Left colon (tissue), 2 donors: ENCODE measurements at regions of chr6 and their contacts with region 1.

Region 1: GRCh38 chr6:24581084-24581669 is 64.8 kb downstream of the KIAA0319 start:
- DNase-seq: peak; percentile 50 to 89
- ATAC-seq: peak; percentile 88

Region 2: DNA sequence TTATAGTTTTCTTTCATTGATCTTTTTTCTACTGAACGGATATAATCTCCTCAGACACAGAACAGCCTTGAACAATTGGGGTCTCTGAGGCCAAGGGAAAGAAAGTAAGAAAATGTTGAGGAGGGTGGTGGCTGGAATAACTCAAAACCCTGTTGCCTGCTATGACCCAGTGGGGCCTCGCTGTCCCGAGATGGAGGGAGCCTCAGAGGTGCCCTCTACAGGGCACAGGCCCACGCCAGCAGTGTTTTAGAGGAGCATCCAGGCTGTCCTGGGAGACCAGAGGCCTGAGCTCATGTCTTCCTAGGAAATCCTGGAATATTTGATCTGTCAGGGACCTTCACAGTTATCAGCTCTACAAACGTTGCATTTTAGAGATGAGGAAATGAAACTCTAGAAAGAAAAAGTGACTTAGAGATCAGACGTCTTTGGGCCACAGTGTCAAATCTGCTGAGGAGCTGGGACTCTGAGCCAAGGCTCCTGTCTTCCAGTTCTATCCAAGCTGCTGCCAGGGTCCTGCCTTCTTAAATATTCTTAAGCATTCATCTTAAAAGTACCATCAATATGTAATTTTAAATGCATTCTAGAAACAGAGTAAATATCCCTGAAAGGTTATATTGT is 60.1 kb before region 1 on chr6:
- intact Hi-C with region 1: no loop called
- DNase-seq: peak in 1 of 2 donors; percentile 65
- ATAC-seq: peak; percentile 94

Region 3: DNA sequence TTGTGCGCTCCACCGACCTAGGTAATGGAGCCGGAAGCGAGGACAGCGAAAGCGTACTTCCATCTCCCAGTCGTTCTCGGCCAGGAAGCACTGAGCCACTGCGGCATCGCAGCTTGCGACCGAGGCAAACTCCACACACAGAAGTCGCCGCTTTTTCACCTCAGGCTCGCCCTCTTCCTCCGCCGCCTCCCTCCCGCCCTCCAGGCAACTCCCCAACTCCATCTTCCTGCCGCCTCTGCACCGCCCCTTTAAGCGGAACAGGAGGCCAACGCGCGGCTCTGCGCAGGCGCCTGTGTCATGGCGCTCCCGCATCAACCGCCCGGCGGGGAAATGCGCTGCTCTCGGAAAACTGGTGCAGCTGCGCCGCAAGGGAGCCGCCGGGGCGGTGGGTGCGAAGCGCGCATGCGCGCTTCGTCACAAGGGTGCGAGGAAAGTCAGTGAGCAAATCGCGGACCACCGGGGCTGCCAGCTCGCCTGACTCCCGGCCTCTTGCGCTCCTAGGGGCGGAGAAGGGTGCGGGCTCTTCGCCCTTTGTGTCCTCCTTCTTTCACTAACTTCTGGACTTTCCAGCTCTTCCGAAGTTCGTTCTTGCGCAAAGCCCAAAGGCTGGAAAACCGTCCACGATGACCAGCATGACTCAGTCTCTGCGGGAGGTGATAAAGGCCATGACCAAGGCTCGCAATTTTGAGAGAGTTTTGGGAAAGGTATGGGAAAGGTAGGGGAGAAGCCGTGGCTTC is 85.6 kb after region 1 on chr6 and contains the starts of genes ACOT13 and TDP2:
- intact Hi-C with region 1: no loop called
- DNase-seq: peak; percentile 95
- ATAC-seq: peak; percentile 81
- total RNA-seq, gene ACOT13: 41.2 to 51.1 TPM
- total RNA-seq, gene TDP2: 151 to 362 TPM

Region 4: GRCh38 chr6:24689964-24690363 is 108.8 kb after region 1 on chr6:
- intact Hi-C with region 1: loop called in 1 of 2 experiments (anchors 2 kb)
- DNase-seq: no peak
- ATAC-seq: no peak

Region 5: GRCh38 chr6:24766680-24767462 is 185.7 kb after region 1 on chr6:
- intact Hi-C with region 1: loop called in 1 of 2 experiments (anchors 10 kb)
- DNase-seq: no peak
- ATAC-seq: peak; percentile 73

Region 6: DNA sequence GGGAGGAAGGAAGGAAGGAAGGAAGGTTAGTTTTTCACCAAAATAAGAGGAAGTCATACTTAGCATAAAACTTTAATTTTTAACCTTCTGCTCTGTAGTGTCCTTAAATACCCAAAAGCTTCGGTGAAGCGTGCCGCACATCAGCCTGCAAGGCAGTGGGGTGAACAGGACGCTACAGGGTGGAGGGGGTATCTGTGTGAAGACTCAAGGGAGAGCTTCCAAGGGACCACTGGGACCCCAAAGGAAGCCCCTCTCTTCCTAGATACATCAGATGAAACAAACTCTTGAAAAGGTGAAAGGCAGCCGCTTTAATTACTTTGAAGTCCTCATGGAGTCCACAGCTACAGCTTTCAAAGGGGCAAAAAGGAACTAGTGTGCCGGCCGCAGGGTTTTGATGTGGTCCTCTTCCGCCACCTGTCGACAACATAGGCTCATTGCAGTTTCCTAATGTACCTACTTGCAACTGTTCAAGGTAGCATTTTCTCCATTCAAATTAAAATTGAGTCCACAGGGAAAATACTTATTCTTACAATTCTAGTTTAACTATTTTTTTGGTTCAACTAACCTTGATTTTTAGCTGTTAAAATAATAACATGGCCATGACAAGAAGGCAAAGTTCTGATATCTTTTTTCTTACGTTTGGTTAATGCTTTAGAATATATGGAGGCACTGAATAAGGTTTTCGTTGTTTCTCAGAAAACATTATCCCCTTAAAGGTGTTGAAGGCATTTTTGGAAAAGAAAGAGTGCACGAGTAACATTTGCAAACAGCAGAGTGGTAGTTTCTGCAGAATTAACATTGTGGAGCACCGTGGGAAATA is 489.6 kb after region 1 on chr6:
- intact Hi-C with region 1: loop called in 1 of 2 experiments (anchors 10 kb)
- DNase-seq: peak; percentile 63 to 80
- ATAC-seq: peak; percentile 87

Region 7: GRCh38 chr6:25107218-25107617 is 526.0 kb after region 1 on chr6:
- intact Hi-C with region 1: no loop called
- DNase-seq: no peak
- ATAC-seq: no peak